ENCODE measurements at regions of chr15 and their contacts with region 1.

Region 1: GRCh38 chr15:58269455-58270414 is 131.6 kb downstream of the AQP9 start:
- DNase-seq: no peak
- ATAC-seq: peak; percentile 93

Region 2: GRCh38 chr15:58046467-58046866 is 223.3 kb before region 1 on chr15:
- intact Hi-C with region 1: no loop called
- DNase-seq: no peak
- ATAC-seq: no peak

Region 3: DNA sequence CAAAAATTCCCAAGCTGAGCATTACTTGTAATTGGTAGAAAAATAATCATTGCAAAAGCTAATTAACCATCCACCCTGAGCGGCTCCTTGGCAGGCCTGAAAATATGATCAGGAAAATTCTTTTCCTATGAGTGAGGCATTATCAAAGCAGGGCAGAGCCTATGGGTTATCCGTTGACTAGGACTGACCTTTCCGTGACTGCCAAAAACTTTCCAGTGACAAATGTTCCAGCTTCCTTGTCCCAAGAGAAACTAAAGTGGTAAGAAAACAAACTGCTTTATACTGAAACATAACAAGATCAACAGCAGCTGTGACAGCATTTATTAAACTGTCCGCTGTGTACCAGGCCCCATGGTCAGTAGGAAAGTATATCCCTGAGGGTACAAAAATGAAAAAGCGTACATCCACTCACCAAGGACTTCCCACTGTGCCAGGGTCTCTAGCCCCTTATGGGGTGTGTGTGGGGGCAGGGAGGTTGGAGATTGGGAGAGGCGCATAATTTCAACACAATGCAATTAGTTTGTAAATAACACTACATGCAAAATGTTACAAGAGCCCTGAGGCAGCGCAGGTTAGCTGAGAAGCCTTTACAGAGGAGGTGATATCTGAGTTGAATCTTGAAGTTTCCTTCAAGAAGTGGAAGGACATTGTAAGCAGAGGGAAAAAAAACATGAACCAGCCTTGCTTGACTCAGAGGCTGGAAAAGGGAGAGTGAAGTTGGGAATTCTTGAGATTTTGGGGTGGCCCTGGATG is 170.6 kb after region 1 on chr15:
- intact Hi-C with region 1: loop called (anchors 10 kb)
- DNase-seq: no peak
- ATAC-seq: peak; percentile 90

Region 4: DNA sequence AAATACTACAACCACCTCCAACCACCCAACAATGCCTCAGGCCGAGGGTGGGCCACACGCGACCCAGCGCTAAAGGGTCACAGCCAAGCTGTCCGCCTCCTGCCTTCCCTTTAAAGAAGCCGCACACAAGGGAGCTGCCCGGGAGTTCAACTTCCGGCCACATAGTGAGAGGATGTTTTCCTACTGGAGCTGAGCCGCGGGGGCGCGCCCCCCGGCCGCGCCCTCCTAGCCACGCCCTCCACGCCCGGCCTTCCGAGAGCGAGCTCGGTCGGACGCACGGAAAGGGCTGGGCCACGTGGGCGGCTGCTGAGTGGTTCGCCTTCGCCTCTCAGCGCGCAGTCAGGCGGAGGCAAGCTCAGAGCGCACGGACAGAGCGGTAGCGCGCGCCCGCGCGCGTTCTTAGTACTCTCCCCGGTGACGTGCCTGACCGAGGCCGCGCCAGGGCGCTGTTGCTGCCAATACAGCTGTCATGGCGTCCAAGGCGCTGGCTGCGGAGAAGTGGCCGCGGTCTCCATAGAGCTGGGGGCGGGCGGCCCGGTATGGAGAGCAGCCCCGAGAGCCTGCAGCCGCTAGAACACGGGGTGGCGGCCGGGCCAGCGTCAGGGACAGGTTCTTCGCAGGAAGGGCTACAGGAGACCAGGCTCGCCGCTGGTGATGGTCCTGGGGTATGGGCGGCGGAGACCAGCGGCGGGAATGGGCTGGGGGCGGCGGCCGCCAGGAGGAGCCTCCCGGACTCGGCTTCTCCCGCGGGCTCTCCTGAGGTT is 501.3 kb after region 1 on chr15 and contains the start of gene MINDY2:
- intact Hi-C with region 1: loop called (anchors 10 kb)
- DNase-seq: peak; percentile 99
- ATAC-seq: peak; percentile 97
- total RNA-seq, gene MINDY2: 37.2 TPM